Activated T-helper 1 cell treated with anti-CD3 and anti-CD28 coated beads, Interleukin-12 subunit alpha, Interleukin-12 subunit beta, Interleukin-2, Interleukin-4 antibody, amounts not matched to agents 30 ng/mL and 10 ng/mL and 1 ng/mL, durations not matched to agents 14 hours and 24 hours and 36 hours (primary cell): ENCODE measurements at regions of chr19 and their contacts with region 1.

Region 1: GRCh38 chr19:55580628-55581144 is at the start of gene ZNF579:
- DNase-seq: peak; percentile 71
- H3K4me3 Mint-ChIP-seq: peak within 1 kb of the TSS; percentile 91
- H3K27ac Mint-ChIP-seq: peak within 1 kb of the TSS; percentile 83
- H3K4me1 Mint-ChIP-seq: peaks cover 26% of the 10 kb centered on the region
- H3K27me3 Mint-ChIP-seq: peaks cover 13% of the 10 kb centered on the region
- total RNA-seq, gene ZNF579: 10.2 and 11.7 TPM in 2 replicates

Region 2: GRCh38 chr19:55599468-55600279 is 19.0 kb after region 1 on chr19 and contains the start of gene FIZ1:
- intact Hi-C with region 1: loop called (anchors 1 kb)
- DNase-seq: peak; percentile 95
- H3K4me3 Mint-ChIP-seq: peak within 1 kb of the TSS; percentile 93
- H3K27ac Mint-ChIP-seq: peak within 1 kb of the TSS; percentile 98
- H3K4me1 Mint-ChIP-seq: peaks cover 28% of the 10 kb centered on the region
- H3K27me3 Mint-ChIP-seq: no peaks in the 10 kb centered on the region
- total RNA-seq, gene FIZ1: 24.2 and 24.7 TPM in 2 replicates